A673 (cell line): ENCODE measurements at regions of chr13 and their contacts with region 1.

Region 1: GRCh38 chr13:71320452-71320851 is 546.6 kb downstream of the DACH1 start:
- DNase-seq: peak; percentile 58
- H3K4me3 ChIP-seq: no peak overlapping the region
- H3K27ac ChIP-seq: no peak overlapping the region
- H3K4me1 ChIP-seq: no peaks in the 10 kb centered on the region
- H3K27me3 ChIP-seq: peaks cover 10% of the 10 kb centered on the region
- CTCF ChIP-seq: peak; percentile 65

Region 2: GRCh38 chr13:70490320-70490935 is 830.0 kb before region 1 on chr13:
- CTCF ChIA-PET with region 1: no interaction called
- POLR2A ChIA-PET with region 1: no interaction called
- intact Hi-C with region 1: no loop called
- DNase-seq: no peak
- H3K4me3 ChIP-seq: no peak overlapping the region
- H3K27ac ChIP-seq: no peak overlapping the region
- H3K4me1 ChIP-seq: no peaks in the 10 kb centered on the region
- H3K27me3 ChIP-seq: no peaks in the 10 kb centered on the region
- CTCF ChIP-seq: no peak

Region 3: DNA sequence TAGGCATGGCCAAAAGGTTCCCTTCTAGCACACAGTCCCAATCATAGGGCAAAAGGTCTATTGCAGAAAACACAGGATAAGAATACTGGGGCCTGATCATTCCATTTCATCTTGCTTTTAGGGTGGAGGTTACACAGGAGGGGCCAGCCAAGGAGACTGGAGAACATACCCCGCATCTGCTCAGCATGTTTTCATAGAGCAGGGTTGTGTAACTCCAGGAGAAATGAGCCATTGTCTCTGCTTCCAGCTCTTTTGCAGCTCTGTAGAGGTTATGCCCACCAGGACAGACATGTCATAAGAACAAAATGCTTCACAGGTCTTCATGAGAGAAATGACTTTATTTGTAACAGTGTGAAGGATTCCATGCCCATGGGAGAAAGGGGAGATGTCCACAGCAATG is 196.2 kb before region 1 on chr13:
- CTCF ChIA-PET with region 1: no interaction called
- POLR2A ChIA-PET with region 1: no interaction called
- intact Hi-C with region 1: no loop called
- DNase-seq: no peak
- H3K4me3 ChIP-seq: no peak overlapping the region
- H3K27ac ChIP-seq: no peak overlapping the region
- H3K4me1 ChIP-seq: no peaks in the 10 kb centered on the region
- H3K27me3 ChIP-seq: no peaks in the 10 kb centered on the region
- CTCF ChIP-seq: no peak

Region 4: DNA sequence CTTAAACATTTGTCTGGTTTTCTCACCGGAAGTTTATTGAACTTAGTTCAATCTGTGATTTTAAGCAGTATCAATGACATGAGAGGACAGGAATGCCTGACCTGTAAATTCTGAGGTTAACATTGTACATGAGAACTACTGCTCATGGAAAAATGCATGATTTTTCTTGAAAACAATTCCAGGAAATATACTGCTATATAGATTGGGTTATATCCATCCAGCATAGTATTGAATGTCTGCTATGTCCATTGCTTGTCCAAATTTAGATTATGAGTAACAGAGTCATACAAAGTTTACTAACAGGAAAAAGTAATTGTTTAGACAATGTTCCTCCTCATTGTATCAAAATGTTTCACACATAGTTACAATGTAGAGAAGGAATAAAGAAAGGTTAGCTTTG is 60.2 kb before region 1 on chr13:
- CTCF ChIA-PET with region 1: no interaction called
- POLR2A ChIA-PET with region 1: no interaction called
- intact Hi-C with region 1: no loop called
- DNase-seq: no peak
- H3K4me3 ChIP-seq: no peak overlapping the region
- H3K27ac ChIP-seq: no peak overlapping the region
- H3K4me1 ChIP-seq: no peaks in the 10 kb centered on the region
- H3K27me3 ChIP-seq: peaks cover 38% of the 10 kb centered on the region
- CTCF ChIP-seq: no peak

Region 5: DNA sequence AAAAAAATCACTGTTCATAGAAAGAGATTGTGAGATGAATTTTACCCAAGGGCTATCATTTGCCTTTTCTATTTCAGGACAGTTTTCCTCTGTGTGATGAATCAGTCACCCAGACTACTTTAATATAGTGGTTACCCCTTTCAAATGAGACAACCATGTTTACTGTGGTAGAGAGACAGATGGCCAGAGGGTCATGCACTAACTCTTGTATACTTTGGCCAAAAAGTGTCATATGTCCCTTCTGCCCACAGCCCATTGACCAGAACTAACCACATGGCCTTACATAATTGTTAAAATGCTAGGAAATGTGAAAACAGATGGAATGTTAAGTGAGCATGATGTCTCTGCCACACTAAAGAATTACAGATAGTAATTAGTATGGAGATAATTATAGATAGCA is 47.9 kb after region 1 on chr13:
- CTCF ChIA-PET with region 1: no interaction called
- POLR2A ChIA-PET with region 1: no interaction called
- intact Hi-C with region 1: no loop called
- DNase-seq: no peak
- H3K4me3 ChIP-seq: no peak overlapping the region
- H3K27ac ChIP-seq: no peak overlapping the region
- H3K4me1 ChIP-seq: no peaks in the 10 kb centered on the region
- H3K27me3 ChIP-seq: no peaks in the 10 kb centered on the region
- CTCF ChIP-seq: no peak

Region 6: DNA sequence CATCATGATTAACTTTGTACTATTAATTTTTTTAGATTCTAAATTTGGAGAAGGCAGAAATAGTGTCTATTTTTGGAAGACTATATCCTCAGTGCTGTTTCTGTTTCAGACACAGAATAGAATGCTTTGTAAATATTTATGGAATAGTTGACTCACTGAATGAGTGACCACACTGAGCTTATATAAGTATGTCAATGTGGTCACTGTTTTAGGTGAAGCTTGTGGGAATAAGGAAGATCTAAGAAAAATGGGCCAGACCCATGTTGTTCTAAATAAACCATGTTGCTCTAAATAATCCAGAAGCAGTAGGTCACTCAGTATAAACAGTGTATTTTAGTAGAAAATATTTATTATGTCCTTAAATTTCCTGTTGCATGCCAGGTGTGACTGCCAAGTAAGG is 592.1 kb after region 1 on chr13:
- CTCF ChIA-PET with region 1: no interaction called
- POLR2A ChIA-PET with region 1: interaction called, 13 read pairs
- intact Hi-C with region 1: no loop called
- DNase-seq: no peak
- H3K4me3 ChIP-seq: no peak overlapping the region
- H3K27ac ChIP-seq: no peak overlapping the region
- H3K4me1 ChIP-seq: no peaks in the 10 kb centered on the region
- H3K27me3 ChIP-seq: no peaks in the 10 kb centered on the region
- CTCF ChIP-seq: no peak

Region 7: DNA sequence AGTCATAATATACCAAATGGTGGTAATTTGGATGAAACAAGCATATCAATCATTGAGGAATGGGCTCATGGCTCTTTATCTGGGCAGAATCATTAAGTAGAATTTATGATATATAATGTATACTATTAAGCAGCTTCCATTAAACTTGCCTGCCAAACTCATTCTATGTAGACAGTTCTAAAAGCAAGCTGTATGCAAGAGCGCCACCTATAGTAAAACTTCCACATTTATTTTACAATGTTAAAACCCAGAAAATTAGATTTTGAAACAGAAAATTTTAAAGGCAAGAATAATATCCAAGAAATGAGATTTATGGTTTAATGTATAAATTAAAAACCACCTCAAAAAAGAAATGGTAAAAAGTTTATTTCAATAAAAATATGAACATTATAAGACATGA is 1245.4 kb after region 1 on chr13:
- CTCF ChIA-PET with region 1: no interaction called
- POLR2A ChIA-PET with region 1: no interaction called
- intact Hi-C with region 1: loop called (anchors 10 kb)
- DNase-seq: peak; percentile 42
- H3K4me3 ChIP-seq: no peak overlapping the region
- H3K27ac ChIP-seq: no peak overlapping the region
- H3K4me1 ChIP-seq: no peaks in the 10 kb centered on the region
- H3K27me3 ChIP-seq: peaks cover 13% of the 10 kb centered on the region
- CTCF ChIP-seq: peak; percentile 73